Ascending aorta (tissue), 2 donors: ENCODE measurements at regions of chr3 and their contacts with region 1.

Region 1: DNA sequence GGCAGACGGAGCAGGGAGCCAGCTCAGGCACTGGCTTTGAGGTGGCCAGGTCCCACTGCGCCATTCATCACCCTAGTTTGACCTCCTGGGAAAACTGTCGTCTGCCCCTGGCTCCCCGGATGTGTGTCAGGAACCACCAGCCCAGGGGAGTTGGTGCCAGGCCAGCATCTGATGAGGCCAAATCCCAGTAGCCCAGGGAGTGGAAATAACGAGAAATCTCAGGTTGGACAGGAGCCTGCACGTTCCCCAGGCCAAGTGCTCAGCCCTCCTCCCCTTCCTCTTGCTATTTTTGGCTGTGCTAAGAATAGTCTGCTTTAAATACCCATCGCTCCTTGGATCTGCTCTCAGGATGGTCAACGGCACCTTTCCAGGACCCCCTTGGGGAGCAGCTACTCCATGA is 93.1 kb upstream of the RPL32 start:
- DNase-seq: peak; percentile 73 to 97
- H3K4me3 ChIP-seq: no peak overlapping the region
- H3K27ac ChIP-seq: peak overlapping the region; percentile 88 to 89
- H3K4me1 ChIP-seq: peaks cover 26 to 67% of the 10 kb centered on the region in 2 donors
- H3K27me3 ChIP-seq: no peaks in the 10 kb centered on the region
- CTCF ChIP-seq: no peak

Region 2: GRCh38 chr3:12954891-12955650 is 20.6 kb after region 1 on chr3:
- intact Hi-C with region 1: loop called (anchors 2 kb)
- DNase-seq: peak; percentile 90 to 98
- H3K4me3 ChIP-seq: peak overlapping the region; percentile 1 to 11
- H3K27ac ChIP-seq: peak overlapping the region; percentile 89 to 92
- H3K4me1 ChIP-seq: peaks cover 49 to 87% of the 10 kb centered on the region in 2 donors
- H3K27me3 ChIP-seq: no peaks in the 10 kb centered on the region
- CTCF ChIP-seq: peak in 2 of 3 experiments; percentile 4 to 23

Region 3: DNA sequence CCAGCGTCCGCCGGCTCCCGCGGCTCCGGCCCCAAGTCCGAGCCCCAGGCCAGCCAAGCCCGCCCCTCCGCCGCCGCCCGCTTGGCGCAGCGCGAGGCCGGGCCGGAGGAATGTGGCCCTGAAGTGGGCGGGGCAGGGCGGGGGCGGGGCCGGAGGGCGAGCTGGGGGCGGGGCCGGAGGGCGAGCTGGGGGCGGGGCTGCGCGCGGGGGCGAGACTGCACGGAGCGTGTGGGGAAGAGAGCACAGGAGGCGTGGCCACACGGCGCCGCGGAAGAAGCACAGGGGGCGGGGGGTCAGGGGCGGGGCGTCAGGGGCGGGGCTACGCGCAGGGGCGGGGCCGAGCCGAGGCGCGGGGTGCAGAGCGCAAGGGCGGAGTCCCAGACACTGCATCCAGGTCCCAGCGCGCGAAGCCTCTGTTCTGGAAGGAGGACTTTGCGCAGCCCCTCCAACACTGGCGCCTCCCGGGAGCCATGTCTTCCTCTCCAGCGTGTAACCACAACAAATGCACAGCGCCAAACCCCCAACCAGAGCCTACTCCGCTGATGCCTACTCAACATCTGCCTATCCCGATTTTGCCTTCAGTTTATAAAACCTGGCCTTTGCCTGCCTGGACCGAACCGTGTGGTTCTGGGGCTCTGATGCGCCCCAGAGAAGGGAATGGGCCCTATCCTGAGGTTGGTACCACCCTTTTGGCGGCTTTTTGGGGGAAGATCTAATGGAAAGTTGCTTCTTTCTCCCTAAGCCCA is 33.3 kb after region 1 on chr3:
- intact Hi-C with region 1: loop called (anchors 1 kb)
- DNase-seq: peak; percentile 63 to 93
- H3K4me3 ChIP-seq: peak overlapping the region; percentile 76 to 89
- H3K27ac ChIP-seq: peak overlapping the region; percentile 82 to 90
- H3K4me1 ChIP-seq: peaks cover 24 to 41% of the 10 kb centered on the region in 2 donors
- H3K27me3 ChIP-seq: no peaks in the 10 kb centered on the region
- CTCF ChIP-seq: no peak

Region 4: DNA sequence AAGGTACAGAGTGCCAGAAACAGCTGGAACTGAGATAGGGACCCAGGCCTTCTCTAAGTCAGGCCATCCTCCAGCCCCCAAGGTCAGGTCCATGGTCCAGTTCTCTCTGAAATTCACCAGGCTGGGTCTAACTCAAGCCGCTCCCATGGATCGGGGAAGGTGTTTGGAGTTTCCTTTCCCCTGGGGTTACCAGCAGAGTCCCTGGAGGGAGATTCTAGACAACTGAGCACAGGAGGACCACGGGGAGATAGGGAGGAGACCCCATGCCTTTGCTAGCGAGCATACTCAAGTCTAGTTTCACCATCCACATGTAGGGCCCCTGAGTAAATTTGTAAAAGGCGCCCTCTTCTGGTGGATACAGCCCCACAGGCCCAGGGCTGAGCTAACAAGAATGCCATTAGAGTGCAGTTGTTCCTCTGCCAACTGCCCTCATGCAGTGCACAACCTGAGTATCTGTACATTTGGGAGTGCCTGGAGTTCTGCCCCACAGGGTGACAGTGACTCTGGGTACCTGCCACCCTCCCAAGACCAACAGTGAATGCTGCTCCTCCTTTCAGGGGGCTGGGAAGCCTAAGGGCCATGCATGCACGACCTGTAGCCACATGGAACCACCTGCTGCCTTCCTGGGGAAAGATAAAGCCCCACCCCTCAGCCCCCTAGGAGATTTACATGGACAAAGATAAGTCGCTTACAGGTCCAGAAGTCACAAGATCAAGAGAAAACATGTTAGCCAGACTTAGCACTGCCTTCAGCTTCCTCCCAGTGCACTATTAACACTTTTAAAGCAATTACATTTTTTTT is 49.8 kb after region 1 on chr3:
- intact Hi-C with region 1: loop called (anchors 1 kb)
- DNase-seq: peak in 1 of 2 donors; percentile 90
- H3K4me3 ChIP-seq: no peak overlapping the region
- H3K27ac ChIP-seq: no peak overlapping the region
- H3K4me1 ChIP-seq: no peaks in the 10 kb centered on the region
- H3K27me3 ChIP-seq: no peaks in the 10 kb centered on the region
- CTCF ChIP-seq: peak; percentile 78 to 86 (median 83)